CD4-positive, alpha-beta T cell (primary cell): ENCODE measurements at regions of chr15 and their contacts with region 1.

Region 1: DNA sequence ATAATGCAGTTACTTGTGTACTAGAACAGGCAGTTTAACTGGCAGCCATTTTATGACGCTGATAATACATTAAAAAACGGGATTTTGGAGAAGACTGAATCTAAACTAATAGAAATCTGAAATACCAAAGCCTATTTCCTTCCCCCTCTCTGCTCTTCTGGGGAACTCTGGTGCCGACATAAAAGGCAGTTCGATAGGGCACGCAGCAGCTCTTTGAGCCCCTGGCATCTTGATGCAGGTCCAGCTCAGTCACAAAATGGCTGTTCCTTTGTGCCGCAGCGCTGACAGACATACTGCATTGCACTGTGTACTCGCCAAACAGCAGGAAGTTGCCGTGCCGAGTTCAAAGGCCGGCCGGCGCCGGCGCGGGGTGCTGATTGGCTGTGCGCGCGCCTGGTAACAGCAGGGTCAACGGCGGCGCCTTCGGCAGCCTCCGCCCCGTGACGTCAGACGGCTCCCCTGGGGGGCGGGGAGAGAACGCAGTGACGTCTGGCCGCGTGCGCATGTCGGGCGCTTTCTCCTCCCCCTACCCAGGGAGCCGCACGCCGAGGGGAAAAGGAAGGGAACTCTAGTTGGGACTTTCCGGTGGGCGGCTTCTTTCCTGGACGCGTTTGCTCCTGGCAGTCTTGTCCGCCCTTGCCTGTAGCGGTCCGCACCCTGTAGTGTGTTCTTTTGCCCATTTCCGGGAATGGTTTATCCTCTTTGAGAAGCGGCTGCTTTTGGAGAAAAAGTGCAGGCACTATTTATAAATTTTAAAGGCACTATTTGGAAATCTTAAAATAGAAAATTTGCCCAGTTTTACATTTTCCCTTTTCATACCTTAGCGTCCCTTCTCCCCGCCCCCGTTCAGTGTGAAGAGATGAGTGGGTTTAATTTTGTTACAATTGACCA is 4.1 kb downstream of the CHD2 start:
- DNase-seq: peak; percentile 97 to 100 (median 98)
- ATAC-seq: peak; percentile 78
- H3K4me3 ChIP-seq: peak overlapping the region; percentile 74
- H3K4me3 Mint-ChIP-seq: peak overlapping the region; percentile 96
- H3K27ac ChIP-seq: peak overlapping the region; percentile 97
- H3K27ac Mint-ChIP-seq: peak overlapping the region; percentile 99
- H3K4me1 ChIP-seq: peaks cover 31% of the 10 kb centered on the region
- H3K4me1 Mint-ChIP-seq: peaks cover 73% of the 10 kb centered on the region
- H3K27me3 ChIP-seq: no peaks in the 10 kb centered on the region
- H3K27me3 Mint-ChIP-seq: no peaks in the 10 kb centered on the region
- CTCF ChIP-seq: no peak

Region 2: GRCh38 chr15:92797168-92797951 is 106.8 kb before region 1 on chr15:
- CTCF ChIA-PET with region 1: interaction called, 15 read pairs
- POLR2A ChIA-PET with region 1: interaction called, 9 read pairs
- intact Hi-C with region 1: no loop called
- DNase-seq: peak in 5 of 14 experiments; percentile 26 to 89 (median 83)
- ATAC-seq: peak; percentile 95
- H3K4me3 ChIP-seq: no peak overlapping the region
- H3K4me3 Mint-ChIP-seq: no peak overlapping the region
- H3K27ac ChIP-seq: no peak overlapping the region
- H3K27ac Mint-ChIP-seq: peak overlapping the region; percentile 31
- H3K4me1 ChIP-seq: peaks cover 10% of the 10 kb centered on the region
- H3K4me1 Mint-ChIP-seq: peaks cover 10% of the 10 kb centered on the region
- H3K27me3 ChIP-seq: no peaks in the 10 kb centered on the region
- H3K27me3 Mint-ChIP-seq: no peaks in the 10 kb centered on the region
- CTCF ChIP-seq: peak; percentile 73

Region 3: GRCh38 chr15:92820236-92821021 is 83.8 kb before region 1 on chr15:
- CTCF ChIA-PET with region 1: interaction called, 4 read pairs
- POLR2A ChIA-PET with region 1: interaction called, 36 read pairs
- intact Hi-C with region 1: no loop called
- DNase-seq: peak; percentile 69 to 94 (median 82)
- ATAC-seq: peak; percentile 81
- H3K4me3 ChIP-seq: peak overlapping the region; percentile 63
- H3K4me3 Mint-ChIP-seq: peak overlapping the region; percentile 88
- H3K27ac ChIP-seq: peak overlapping the region; percentile 82 to 91
- H3K27ac Mint-ChIP-seq: peak overlapping the region; percentile 79
- H3K4me1 ChIP-seq: peaks cover 52% of the 10 kb centered on the region
- H3K4me1 Mint-ChIP-seq: peaks cover 55% of the 10 kb centered on the region
- H3K27me3 ChIP-seq: no peaks in the 10 kb centered on the region
- H3K27me3 Mint-ChIP-seq: no peaks in the 10 kb centered on the region
- CTCF ChIP-seq: no peak

Region 4: GRCh38 chr15:92831655-92832328 is 72.4 kb before region 1 on chr15:
- CTCF ChIA-PET with region 1: interaction called, 11 read pairs
- POLR2A ChIA-PET with region 1: interaction called, 146 read pairs
- intact Hi-C with region 1: loop called in 1 of 2 experiments (anchors 5 kb)
- DNase-seq: peak; percentile 73 to 95 (median 89)
- ATAC-seq: peak; percentile 91
- H3K4me3 ChIP-seq: peak overlapping the region; percentile 33
- H3K4me3 Mint-ChIP-seq: peak overlapping the region; percentile 73
- H3K27ac ChIP-seq: peak overlapping the region; percentile 85 to 96
- H3K27ac Mint-ChIP-seq: peak overlapping the region; percentile 98
- H3K4me1 ChIP-seq: peaks cover 46% of the 10 kb centered on the region
- H3K4me1 Mint-ChIP-seq: peaks cover 57% of the 10 kb centered on the region
- H3K27me3 ChIP-seq: no peaks in the 10 kb centered on the region
- H3K27me3 Mint-ChIP-seq: no peaks in the 10 kb centered on the region
- CTCF ChIP-seq: no peak

Region 5: DNA sequence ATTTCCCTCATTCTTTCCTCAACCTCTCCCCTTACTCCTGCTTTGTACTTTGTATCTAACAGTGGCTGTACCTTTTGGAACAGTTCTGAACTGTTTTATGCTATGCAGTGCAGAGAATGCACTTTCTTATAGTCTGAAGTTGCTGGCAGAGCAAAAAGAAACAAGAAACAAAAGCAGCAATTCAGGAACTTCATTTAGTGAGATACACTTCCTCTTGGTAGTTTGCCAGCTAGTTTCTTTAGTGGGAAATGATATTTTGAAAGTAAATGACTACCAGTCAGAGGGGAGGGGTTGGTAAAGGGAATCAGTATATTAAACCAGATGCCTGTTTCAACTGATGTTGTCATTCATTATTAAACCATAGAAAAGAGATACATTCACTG is 59.1 kb before region 1 on chr15:
- CTCF ChIA-PET with region 1: no interaction called
- POLR2A ChIA-PET with region 1: interaction called, 19 read pairs
- intact Hi-C with region 1: no loop called
- DNase-seq: peak in 3 of 14 experiments; percentile 76 to 84 (median 81)
- ATAC-seq: peak; percentile 46
- H3K4me3 ChIP-seq: peak overlapping the region; percentile 31
- H3K4me3 Mint-ChIP-seq: peak overlapping the region; percentile 88
- H3K27ac ChIP-seq: peak overlapping the region; percentile 37 to 75
- H3K27ac Mint-ChIP-seq: peak overlapping the region; percentile 91
- H3K4me1 ChIP-seq: peaks cover 79% of the 10 kb centered on the region
- H3K4me1 Mint-ChIP-seq: peaks cover 63% of the 10 kb centered on the region
- H3K27me3 ChIP-seq: no peaks in the 10 kb centered on the region
- H3K27me3 Mint-ChIP-seq: no peaks in the 10 kb centered on the region
- CTCF ChIP-seq: no peak

Region 6: DNA sequence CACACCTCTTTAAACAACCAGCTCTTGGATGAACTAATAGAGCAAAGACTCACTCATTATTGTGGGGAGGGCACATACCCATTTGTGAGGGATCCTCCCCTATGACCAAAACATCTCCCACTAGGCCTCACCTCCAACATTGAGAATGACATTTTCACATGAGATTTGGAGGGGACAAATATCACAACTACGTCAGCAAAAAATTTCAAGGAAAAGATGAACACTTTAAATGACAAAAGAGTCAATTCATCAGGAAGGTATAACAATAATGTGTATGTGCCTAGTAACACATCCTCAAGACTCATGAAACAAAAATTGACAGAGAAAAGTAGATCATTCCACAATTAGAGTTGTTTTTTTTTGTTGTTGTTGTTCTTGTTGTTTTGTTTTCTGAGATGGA is 42.4 kb before region 1 on chr15:
- CTCF ChIA-PET with region 1: no interaction called
- POLR2A ChIA-PET with region 1: no interaction called
- intact Hi-C with region 1: no loop called
- DNase-seq: no peak
- ATAC-seq: no peak
- H3K4me3 ChIP-seq: no peak overlapping the region
- H3K4me3 Mint-ChIP-seq: no peak overlapping the region
- H3K27ac ChIP-seq: no peak overlapping the region
- H3K27ac Mint-ChIP-seq: no peak overlapping the region
- H3K4me1 ChIP-seq: no peaks in the 10 kb centered on the region
- H3K4me1 Mint-ChIP-seq: no peaks in the 10 kb centered on the region
- H3K27me3 ChIP-seq: no peaks in the 10 kb centered on the region
- H3K27me3 Mint-ChIP-seq: no peaks in the 10 kb centered on the region
- CTCF ChIP-seq: no peak

Region 7: GRCh38 chr15:92891533-92892200 is 12.5 kb before region 1 on chr15:
- CTCF ChIA-PET with region 1: interaction called, 8 read pairs
- POLR2A ChIA-PET with region 1: interaction called, 1,007 read pairs
- intact Hi-C with region 1: loop called in 1 of 2 experiments (anchors 1 kb)
- DNase-seq: peak in 1 of 14 experiments; percentile 4
- ATAC-seq: no peak
- H3K4me3 ChIP-seq: no peak overlapping the region
- H3K4me3 Mint-ChIP-seq: peak overlapping the region; percentile 70
- H3K27ac ChIP-seq: peak overlapping the region in 1 of 2 donors; percentile 20
- H3K27ac Mint-ChIP-seq: peak overlapping the region; percentile 99
- H3K4me1 ChIP-seq: peaks cover 35% of the 10 kb centered on the region
- H3K4me1 Mint-ChIP-seq: peaks cover 93% of the 10 kb centered on the region
- H3K27me3 ChIP-seq: no peaks in the 10 kb centered on the region
- H3K27me3 Mint-ChIP-seq: no peaks in the 10 kb centered on the region
- CTCF ChIP-seq: no peak

Region 8: GRCh38 chr15:92917606-92918407 is 13.6 kb after region 1 on chr15:
- CTCF ChIA-PET with region 1: interaction called, 51 read pairs
- POLR2A ChIA-PET with region 1: interaction called, 352 read pairs
- intact Hi-C with region 1: loop called (anchors 1 kb)
- DNase-seq: peak; percentile 82 to 95 (median 90)
- ATAC-seq: peak; percentile 26
- H3K4me3 ChIP-seq: no peak overlapping the region
- H3K4me3 Mint-ChIP-seq: peak overlapping the region; percentile 67
- H3K27ac ChIP-seq: peak overlapping the region; percentile 63 to 75
- H3K27ac Mint-ChIP-seq: peak overlapping the region; percentile 99
- H3K4me1 ChIP-seq: peaks cover 77% of the 10 kb centered on the region
- H3K4me1 Mint-ChIP-seq: peaks cover 84% of the 10 kb centered on the region
- H3K27me3 ChIP-seq: no peaks in the 10 kb centered on the region
- H3K27me3 Mint-ChIP-seq: no peaks in the 10 kb centered on the region
- CTCF ChIP-seq: peak; percentile 94